Activated CD8-positive, alpha-beta memory T cell treated with anti-CD3 and anti-CD28 coated beads, Interleukin-2, amount 10 ng/mL, durations not matched to agents 7 days and 5 days (primary cell): ENCODE measurements at regions of chr2 and their contacts with region 1.

Region 1: DNA sequence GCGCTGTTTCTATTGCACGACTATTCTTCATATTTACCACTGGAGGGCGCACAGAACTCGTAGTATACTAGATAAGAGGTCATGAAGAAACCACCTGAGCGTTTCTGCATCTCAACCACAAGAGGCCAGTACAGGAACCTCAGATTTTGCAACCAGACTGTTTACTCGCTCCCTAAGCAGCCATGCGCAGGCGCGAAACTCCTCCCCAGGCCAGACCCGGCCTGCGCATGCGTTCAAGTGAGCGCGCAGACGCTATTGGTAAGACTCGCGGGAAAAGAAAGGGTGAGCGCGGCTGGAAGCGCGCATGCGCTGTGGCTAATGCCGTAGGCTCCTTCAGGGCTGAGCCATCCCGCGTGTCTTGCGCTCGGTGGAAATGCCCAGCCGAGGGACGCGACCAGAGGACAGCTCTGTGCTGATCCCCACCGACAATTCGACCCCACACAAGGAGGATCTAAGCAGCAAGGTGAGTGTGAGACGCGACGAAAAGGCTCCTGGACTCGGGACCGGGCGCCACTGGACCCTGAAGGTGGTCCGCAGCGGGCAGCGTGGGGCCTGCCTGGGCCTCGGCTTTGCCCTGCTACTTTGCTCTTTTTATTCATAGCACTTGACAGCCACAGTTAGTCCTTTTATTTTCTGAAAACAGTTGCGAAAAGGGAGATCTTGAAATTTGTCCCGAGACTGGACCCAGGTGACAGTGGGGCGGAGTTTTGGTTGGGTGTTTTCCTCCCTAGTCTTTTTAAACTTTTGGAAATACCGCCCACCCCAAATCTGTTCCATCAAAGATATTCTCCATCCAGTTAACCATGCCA is at the start of gene ASNSD1:
- DNase-seq: peak; percentile 99
- ATAC-seq: peak; percentile 84
- H3K4me3 Mint-ChIP-seq: no peak within 1 kb of the TSS
- H3K27ac Mint-ChIP-seq: no peak within 1 kb of the TSS
- H3K4me1 Mint-ChIP-seq: peaks cover 54% of the 10 kb centered on the region
- H3K27me3 Mint-ChIP-seq: no peaks in the 10 kb centered on the region
- total RNA-seq, gene ASNSD1: 30.7 to 39.1 TPM

Region 2: GRCh38 chr2:189683363-189683762 is 22.0 kb after region 1 on chr2:
- CTCF ChIA-PET with region 1: no interaction called
- DNase-seq: no peak
- ATAC-seq: peak; percentile 47
- H3K4me3 Mint-ChIP-seq: no peak overlapping the region
- H3K27ac Mint-ChIP-seq: no peak overlapping the region
- H3K4me1 Mint-ChIP-seq: peaks cover 30% of the 10 kb centered on the region
- H3K27me3 Mint-ChIP-seq: no peaks in the 10 kb centered on the region

Region 3: GRCh38 chr2:189698020-189698887 is 36.9 kb after region 1 on chr2:
- CTCF ChIA-PET with region 1: interaction called, 69 read pairs
- DNase-seq: peak; percentile 51
- ATAC-seq: peak; percentile 68
- H3K4me3 Mint-ChIP-seq: peak overlapping the region; percentile 27
- H3K27ac Mint-ChIP-seq: peak overlapping the region; percentile 70
- H3K4me1 Mint-ChIP-seq: peaks cover 2% of the 10 kb centered on the region
- H3K27me3 Mint-ChIP-seq: no peaks in the 10 kb centered on the region

Region 4: GRCh38 chr2:189762551-189763298 is 101.4 kb after region 1 on chr2 and contains the start of gene OSGEPL1:
- CTCF ChIA-PET with region 1: interaction called, 25 read pairs
- DNase-seq: peak; percentile 96
- ATAC-seq: peak; percentile 96
- H3K4me3 Mint-ChIP-seq: peak within 1 kb of the TSS; percentile 92
- H3K27ac Mint-ChIP-seq: peak within 1 kb of the TSS; percentile 98
- H3K4me1 Mint-ChIP-seq: peaks cover 14% of the 10 kb centered on the region
- H3K27me3 Mint-ChIP-seq: no peaks in the 10 kb centered on the region
- total RNA-seq, gene OSGEPL1: 10.0 to 11.3 TPM